ENCODE measurements at regions of chr7 and their contacts with region 1.

Region 1: GRCh38 chr7:93921607-93922566 is at the start of gene GNG11:
- DNase-seq: peak; percentile 78 to 92 (median 88)
- H3K4me3 ChIP-seq: peak within 1 kb of the TSS; percentile 83 to 92 (median 87)
- H3K27ac ChIP-seq: peak within 1 kb of the TSS; percentile 88 to 89
- H3K4me1 ChIP-seq: peaks cover 0 to 10% (median 1%) of the 10 kb centered on the region in 3 donors
- H3K27me3 ChIP-seq: no peaks in the 10 kb centered on the region
- CTCF ChIP-seq: no peak
- total RNA-seq, gene GNG11: 23.1 TPM

Region 2: GRCh38 chr7:93992423-93993110 is 70.7 kb after region 1 on chr7:
- intact Hi-C with region 1: loop called (anchors 10 kb)
- DNase-seq: no peak
- H3K4me3 ChIP-seq: no peak overlapping the region
- H3K27ac ChIP-seq: no peak overlapping the region
- H3K4me1 ChIP-seq: no peaks in the 10 kb centered on the region
- H3K27me3 ChIP-seq: no peaks in the 10 kb centered on the region
- CTCF ChIP-seq: no peak

Region 3: GRCh38 chr7:94205529-94205928 is 283.6 kb after region 1 on chr7:
- intact Hi-C with region 1: no loop called
- DNase-seq: no peak
- H3K4me3 ChIP-seq: no peak overlapping the region
- H3K27ac ChIP-seq: no peak overlapping the region
- H3K4me1 ChIP-seq: no peaks in the 10 kb centered on the region
- H3K27me3 ChIP-seq: no peaks in the 10 kb centered on the region
- CTCF ChIP-seq: no peak

Region 4: GRCh38 chr7:94330269-94331020 is 408.6 kb after region 1 on chr7:
- intact Hi-C with region 1: no loop called
- DNase-seq: peak in 1 of 5 donors; percentile 38
- H3K4me3 ChIP-seq: no peak overlapping the region
- H3K27ac ChIP-seq: no peak overlapping the region
- H3K4me1 ChIP-seq: no peaks in the 10 kb centered on the region
- H3K27me3 ChIP-seq: no peaks in the 10 kb centered on the region
- CTCF ChIP-seq: no peak